Caco-2 (cell line): ENCODE measurements at regions of chr10 and their contacts with region 1.

Region 1: GRCh38 chr10:13099666-13100348 is at the start of gene OPTN:
- DNase-seq: peak; percentile 88 to 93
- H3K4me3 ChIP-seq: peak within 1 kb of the TSS; percentile 93
- H3K4me3 Mint-ChIP-seq: peak within 1 kb of the TSS; percentile 74
- H3K27ac Mint-ChIP-seq: peak within 1 kb of the TSS; percentile 48
- H3K4me1 ChIP-seq: peaks cover 11% of the 10 kb centered on the region; the same call in 1 of the 2 replicates
- H3K4me1 Mint-ChIP-seq: peaks cover 22% of the 10 kb centered on the region
- H3K27me3 ChIP-seq: no peaks in the 10 kb centered on the region
- H3K27me3 Mint-ChIP-seq: no peaks in the 10 kb centered on the region
- CTCF ChIP-seq: peak; percentile 87 to 96
- total RNA-seq, gene OPTN: 59.6 and 70.9 TPM in 2 replicates

Region 2: GRCh38 chr10:13160934-13161856 is 61.4 kb after region 1 on chr10 and contains the start of gene MCM10:
- CTCF ChIA-PET with region 1: interaction called, 6 read pairs
- POLR2A ChIA-PET with region 1: no interaction called
- intact Hi-C with region 1: loop called (anchors 1 kb)
- DNase-seq: peak; percentile 100
- H3K4me3 ChIP-seq: peak within 1 kb of the TSS; percentile 74
- H3K4me3 Mint-ChIP-seq: peak within 1 kb of the TSS; percentile 78
- H3K27ac Mint-ChIP-seq: peak within 1 kb of the TSS; percentile 61
- H3K4me1 ChIP-seq: peaks cover 4% of the 10 kb centered on the region; the same call in 1 of the 2 replicates
- H3K4me1 Mint-ChIP-seq: peaks cover 16% of the 10 kb centered on the region
- H3K27me3 ChIP-seq: no peaks in the 10 kb centered on the region
- H3K27me3 Mint-ChIP-seq: no peaks in the 10 kb centered on the region
- CTCF ChIP-seq: peak; percentile 91 to 92
- total RNA-seq, gene MCM10: 55.0 and 62.6 TPM in 2 replicates